GM12878 (cell line): ENCODE measurements at regions of chr22 and their contacts with region 1.

Region 1: GRCh38 chr22:46762238-46763050 is at the start of gene TBC1D22A:
- DNase-seq: no peak
- ATAC-seq: peak; percentile 80
- H3K4me3 ChIP-seq: peak within 1 kb of the TSS; percentile 97
- H3K27ac ChIP-seq: peak within 1 kb of the TSS; percentile 91
- H3K4me1 ChIP-seq: peaks cover 13% of the 10 kb centered on the region
- H3K27me3 ChIP-seq: no peaks in the 10 kb centered on the region
- CTCF ChIP-seq: 0 out of 6 replicates have a peak, but pooled peaks of 2 of the 3 experiments have one; percentile 0 to 9
- EP300 ChIP-seq: no peak
- POLR2A ChIP-seq: peak; percentile 99
- RAD21 ChIP-seq: no peak
- polyA plus RNA-seq, gene TBC1D22A: 0.63 to 2.6 TPM

Region 2: DNA sequence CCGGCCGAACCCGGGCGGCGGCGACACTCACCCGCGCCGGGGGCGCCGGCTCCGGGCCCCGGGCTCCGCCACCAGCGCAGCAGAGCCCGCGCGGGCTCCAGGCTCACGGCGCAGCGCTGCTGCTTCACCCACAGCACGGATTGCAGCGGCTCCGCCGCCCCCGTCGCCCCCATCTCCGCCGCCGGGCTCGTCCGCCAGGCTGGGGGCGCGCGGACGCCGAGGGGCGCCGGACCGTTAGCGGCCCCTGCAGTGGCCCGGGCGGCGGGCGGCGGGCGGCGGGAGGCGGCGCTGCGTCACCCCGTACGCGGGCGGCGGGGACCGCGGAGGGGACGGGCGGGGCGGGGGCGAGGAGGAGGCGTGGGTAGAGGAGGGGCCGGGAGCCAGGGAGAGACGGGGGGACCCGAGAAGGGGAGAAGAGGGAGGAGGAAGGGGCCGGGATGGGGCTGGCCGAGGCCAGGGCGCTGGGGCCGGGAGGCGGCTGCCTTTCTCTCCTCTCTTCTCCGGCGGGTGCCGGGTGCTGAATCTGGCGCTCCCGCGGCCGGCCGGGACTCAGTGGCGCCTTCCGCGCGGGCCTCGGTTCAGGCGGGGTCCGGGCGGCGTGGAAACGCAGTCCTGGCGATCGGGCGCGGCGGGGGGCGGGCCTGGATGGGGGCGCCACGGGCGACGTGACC is 24.3 kb before region 1 on chr22 and contains the start of gene CERK:
- CTCF ChIA-PET with region 1: interaction called, 15 read pairs
- POLR2A ChIA-PET with region 1: no interaction called
- RAD21 ChIA-PET with region 1: interaction called, 9 read pairs
- SMC1A ChIA-PET with region 1: interaction called, 5 read pairs
- in situ Hi-C with region 1: no loop called
- intact Hi-C with region 1: no loop called
- DNase-seq: no peak
- ATAC-seq: peak; percentile 61
- H3K4me3 ChIP-seq: peak within 1 kb of the TSS; percentile 96
- H3K27ac ChIP-seq: peak within 1 kb of the TSS; percentile 63
- H3K4me1 ChIP-seq: peaks cover 30% of the 10 kb centered on the region
- H3K27me3 ChIP-seq: no peaks in the 10 kb centered on the region
- CTCF ChIP-seq: no peak
- EP300 ChIP-seq: no peak
- POLR2A ChIP-seq: peak; percentile 56; the same call in 1 of the 2 replicates
- RAD21 ChIP-seq: no peak
- polyA plus RNA-seq, gene CERK: 4.0 to 5.8 TPM

Region 3: GRCh38 chr22:46774253-46774979 is 12.0 kb after region 1 on chr22:
- CTCF ChIA-PET with region 1: interaction called, 117 read pairs
- POLR2A ChIA-PET with region 1: interaction called, 56 read pairs
- RAD21 ChIA-PET with region 1: interaction called, 82 read pairs
- SMC1A ChIA-PET with region 1: interaction called, 72 read pairs
- in situ Hi-C with region 1: no loop called
- intact Hi-C with region 1: loop called (anchors 1 kb)
- DNase-seq: no peak
- ATAC-seq: peak; percentile 62
- H3K4me3 ChIP-seq: peak overlapping the region; percentile 73
- H3K27ac ChIP-seq: peak overlapping the region; percentile 94
- H3K4me1 ChIP-seq: peaks cover 63% of the 10 kb centered on the region
- H3K27me3 ChIP-seq: no peaks in the 10 kb centered on the region
- CTCF ChIP-seq: no peak; a peak in 1 of 6 replicates
- EP300 ChIP-seq: peak in 1 of 2 experiments; percentile 69; a peak in 1 of 4 replicates
- POLR2A ChIP-seq: no peak; the same call in none of the 2 replicates
- RAD21 ChIP-seq: no peak

Region 4: GRCh38 chr22:46791201-46791731 is 28.8 kb after region 1 on chr22:
- CTCF ChIA-PET with region 1: interaction called, 13 read pairs
- POLR2A ChIA-PET with region 1: no interaction called
- RAD21 ChIA-PET with region 1: interaction called, 3 read pairs
- SMC1A ChIA-PET with region 1: interaction called, 9 read pairs
- in situ Hi-C with region 1: no loop called
- intact Hi-C with region 1: no loop called
- DNase-seq: no peak
- ATAC-seq: peak; percentile 81
- H3K4me3 ChIP-seq: no peak overlapping the region
- H3K27ac ChIP-seq: peak overlapping the region; percentile 13; the same call in 1 of the 2 replicates
- H3K4me1 ChIP-seq: peaks cover 22% of the 10 kb centered on the region
- H3K27me3 ChIP-seq: no peaks in the 10 kb centered on the region
- CTCF ChIP-seq: no peak
- EP300 ChIP-seq: no peak
- POLR2A ChIP-seq: no peak
- RAD21 ChIP-seq: no peak

Region 5: GRCh38 chr22:46845296-46846149 is 83.1 kb after region 1 on chr22:
- CTCF ChIA-PET with region 1: no interaction called
- POLR2A ChIA-PET with region 1: no interaction called
- RAD21 ChIA-PET with region 1: no interaction called
- SMC1A ChIA-PET with region 1: no interaction called
- in situ Hi-C with region 1: no loop called
- intact Hi-C with region 1: no loop called
- DNase-seq: no peak
- ATAC-seq: no peak
- H3K4me3 ChIP-seq: no peak overlapping the region
- H3K27ac ChIP-seq: no peak overlapping the region
- H3K4me1 ChIP-seq: no peaks in the 10 kb centered on the region
- H3K27me3 ChIP-seq: no peaks in the 10 kb centered on the region
- CTCF ChIP-seq: no peak
- EP300 ChIP-seq: no peak
- POLR2A ChIP-seq: no peak
- RAD21 ChIP-seq: no peak

Region 6: DNA sequence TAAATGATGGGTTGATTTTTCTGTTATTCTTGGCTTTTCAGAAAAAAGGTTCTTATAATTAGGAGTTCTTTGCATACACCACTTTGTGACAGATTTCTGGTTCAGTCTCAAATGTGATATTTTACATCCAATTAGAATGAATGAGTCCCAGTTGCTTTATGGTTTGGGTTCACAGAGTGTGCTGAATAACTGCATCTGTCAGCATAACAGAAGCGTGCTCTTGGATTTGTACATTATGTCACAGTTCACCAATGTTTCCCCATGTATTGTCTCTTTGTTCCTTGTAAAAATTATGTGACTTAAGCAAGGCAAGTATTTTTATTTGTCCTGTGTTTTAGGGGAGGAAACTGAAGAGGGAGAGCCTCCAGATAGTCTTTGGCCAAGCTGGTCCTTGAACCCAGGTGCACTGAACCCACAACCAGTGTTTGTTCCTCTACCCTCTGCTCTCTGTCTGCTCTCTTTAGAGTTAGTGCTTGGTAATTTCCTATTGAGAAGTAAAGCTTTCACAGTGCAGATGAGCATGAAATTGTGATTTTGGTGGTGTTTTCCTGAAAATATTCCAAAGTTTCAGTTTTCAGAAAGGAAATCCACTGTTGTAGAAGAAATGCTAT is 107.5 kb after region 1 on chr22:
- CTCF ChIA-PET with region 1: no interaction called
- POLR2A ChIA-PET with region 1: no interaction called
- RAD21 ChIA-PET with region 1: no interaction called
- SMC1A ChIA-PET with region 1: no interaction called
- in situ Hi-C with region 1: no loop called
- intact Hi-C with region 1: no loop called
- DNase-seq: no peak
- ATAC-seq: no peak
- H3K4me3 ChIP-seq: no peak overlapping the region
- H3K27ac ChIP-seq: no peak overlapping the region
- H3K4me1 ChIP-seq: no peaks in the 10 kb centered on the region
- H3K27me3 ChIP-seq: no peaks in the 10 kb centered on the region
- CTCF ChIP-seq: no peak
- EP300 ChIP-seq: no peak
- POLR2A ChIP-seq: no peak
- RAD21 ChIP-seq: no peak

Region 7: GRCh38 chr22:46881373-46882118 is 119.1 kb after region 1 on chr22:
- CTCF ChIA-PET with region 1: no interaction called
- POLR2A ChIA-PET with region 1: no interaction called
- RAD21 ChIA-PET with region 1: no interaction called
- SMC1A ChIA-PET with region 1: no interaction called
- in situ Hi-C with region 1: no loop called
- intact Hi-C with region 1: no loop called
- DNase-seq: no peak
- ATAC-seq: no peak
- H3K4me3 ChIP-seq: no peak overlapping the region
- H3K27ac ChIP-seq: no peak overlapping the region
- H3K4me1 ChIP-seq: no peaks in the 10 kb centered on the region
- H3K27me3 ChIP-seq: no peaks in the 10 kb centered on the region
- CTCF ChIP-seq: no peak
- EP300 ChIP-seq: no peak
- POLR2A ChIP-seq: no peak
- RAD21 ChIP-seq: no peak

Region 8: GRCh38 chr22:48098243-48098920 is 1335.9 kb after region 1 on chr22:
- CTCF ChIA-PET with region 1: no interaction called
- POLR2A ChIA-PET with region 1: no interaction called
- RAD21 ChIA-PET with region 1: no interaction called
- SMC1A ChIA-PET with region 1: no interaction called
- in situ Hi-C with region 1: loop called (anchors 25 kb)
- intact Hi-C with region 1: no loop called
- DNase-seq: peak; percentile 93
- ATAC-seq: peak; percentile 88
- H3K4me3 ChIP-seq: peak overlapping the region; percentile 4; the same call in 1 of the 2 replicates
- H3K27ac ChIP-seq: peak overlapping the region; percentile 94
- H3K4me1 ChIP-seq: peaks cover 40% of the 10 kb centered on the region
- H3K27me3 ChIP-seq: no peaks in the 10 kb centered on the region
- CTCF ChIP-seq: no peak
- EP300 ChIP-seq: peak; percentile 96 to 98
- POLR2A ChIP-seq: no peak
- RAD21 ChIP-seq: no peak